Right cardiac atrium (tissue), 5 donors: ENCODE measurements at regions of chr19 and their contacts with region 1.

Region 1: DNA sequence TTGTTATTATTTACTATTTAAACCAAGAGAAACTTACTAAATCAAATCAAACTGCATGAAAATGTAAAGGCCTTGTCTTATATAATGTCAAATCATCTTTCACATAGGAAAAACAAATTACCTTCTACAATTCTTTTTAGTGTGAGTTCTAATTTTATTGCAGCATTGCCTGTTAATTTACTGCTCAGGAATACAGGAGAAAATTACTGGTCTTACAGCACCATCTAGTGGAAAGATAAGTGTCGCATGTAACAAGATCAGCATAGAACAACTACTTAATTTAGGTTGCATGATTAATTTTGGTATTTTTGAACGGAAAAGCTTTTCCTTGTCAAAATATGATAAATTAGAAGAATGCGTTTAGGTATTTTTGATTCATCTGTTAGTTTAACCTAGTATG is 502.7 kb downstream of the UQCRFS1 start:
- DNase-seq: no peak
- ATAC-seq: no peak
- H3K4me3 ChIP-seq: no peak overlapping the region
- H3K27ac ChIP-seq: no peak overlapping the region
- H3K4me1 ChIP-seq: no peaks in the 10 kb centered on the region
- H3K27me3 ChIP-seq: no peaks in the 10 kb centered on the region

Region 2: DNA sequence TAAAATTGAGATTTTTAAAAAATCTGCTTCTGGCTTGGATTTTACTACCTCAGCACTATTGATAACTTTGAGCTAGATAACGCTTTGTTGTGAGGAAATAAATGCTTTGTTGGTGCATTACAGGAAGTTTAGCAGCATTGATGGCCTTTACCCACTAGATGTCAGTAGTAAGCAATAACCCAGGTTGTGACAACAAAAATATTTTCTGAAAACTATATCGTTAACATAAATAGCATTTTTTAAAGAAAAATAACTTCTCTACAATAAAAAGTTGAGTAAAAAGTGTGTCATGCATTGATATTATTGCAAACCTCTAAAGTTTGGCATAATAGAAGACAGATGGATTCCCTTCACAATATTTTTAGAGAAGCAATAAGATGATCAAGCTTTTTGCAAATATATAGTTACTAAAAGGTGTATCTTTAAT is 743.9 kb before region 1 on chr19:
- intact Hi-C with region 1: loop called in 1 of 4 experiments (anchors 10 kb)
- DNase-seq: no peak
- ATAC-seq: no peak
- H3K4me3 ChIP-seq: no peak overlapping the region
- H3K27ac ChIP-seq: no peak overlapping the region
- H3K4me1 ChIP-seq: no peaks in the 10 kb centered on the region
- H3K27me3 ChIP-seq: no peaks in the 10 kb centered on the region

Region 3: DNA sequence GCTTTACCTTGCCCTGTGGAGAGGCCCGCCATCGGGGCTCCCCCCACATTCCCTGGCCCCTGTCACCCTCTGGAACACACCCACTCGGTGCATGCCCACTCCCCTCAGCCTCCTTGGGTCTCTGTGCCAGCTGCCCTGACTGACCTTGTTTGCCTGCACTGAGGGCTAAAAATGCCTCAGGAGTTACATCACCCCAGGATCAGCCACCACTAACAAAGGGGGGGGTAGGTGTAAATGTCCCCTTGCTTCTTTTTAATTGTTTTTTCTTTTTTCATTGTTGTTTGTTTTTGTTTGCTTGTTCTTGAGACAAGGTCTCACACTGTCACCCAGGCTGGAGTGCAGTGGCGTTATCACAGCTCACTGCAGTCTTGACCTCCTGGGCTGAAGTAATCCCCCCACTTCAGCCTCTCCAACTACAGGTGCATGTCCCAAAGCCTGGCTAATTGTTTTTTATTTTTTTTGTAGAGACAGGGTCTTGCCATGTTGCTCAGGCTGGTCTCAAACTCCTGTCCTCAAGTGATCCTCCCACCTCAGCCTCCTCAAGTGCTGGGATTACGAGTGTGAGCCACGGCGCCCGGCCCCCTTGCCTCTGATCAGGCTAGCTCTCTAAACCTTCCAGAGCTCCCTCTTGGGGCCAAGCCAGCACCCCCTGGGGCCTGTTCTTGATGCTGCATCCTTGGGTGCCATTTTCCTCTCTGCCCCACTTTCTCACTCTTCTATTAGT is 205.6 kb after region 1 on chr19:
- intact Hi-C with region 1: no loop called
- DNase-seq: no peak
- ATAC-seq: no peak
- H3K4me3 ChIP-seq: no peak overlapping the region
- H3K27ac ChIP-seq: no peak overlapping the region
- H3K4me1 ChIP-seq: no peaks in the 10 kb centered on the region
- H3K27me3 ChIP-seq: no peaks in the 10 kb centered on the region